GM12878 (cell line): ENCODE measurements at regions of chr15 and their contacts with region 1.

Region 1: GRCh38 chr15:79853458-79854328 is 43.1 kb downstream of the MTHFS start:
- DNase-seq: peak; percentile 52
- ATAC-seq: peak; percentile 99
- H3K4me3 ChIP-seq: no peak overlapping the region
- H3K27ac ChIP-seq: no peak overlapping the region
- H3K4me1 ChIP-seq: no peaks in the 10 kb centered on the region
- H3K27me3 ChIP-seq: no peaks in the 10 kb centered on the region
- CTCF ChIP-seq: peak; percentile 94 to 98 (median 97); a peak in 5 of 6 replicates
- EP300 ChIP-seq: no peak
- POLR2A ChIP-seq: no peak
- RAD21 ChIP-seq: peak; percentile 84

Region 2: DNA sequence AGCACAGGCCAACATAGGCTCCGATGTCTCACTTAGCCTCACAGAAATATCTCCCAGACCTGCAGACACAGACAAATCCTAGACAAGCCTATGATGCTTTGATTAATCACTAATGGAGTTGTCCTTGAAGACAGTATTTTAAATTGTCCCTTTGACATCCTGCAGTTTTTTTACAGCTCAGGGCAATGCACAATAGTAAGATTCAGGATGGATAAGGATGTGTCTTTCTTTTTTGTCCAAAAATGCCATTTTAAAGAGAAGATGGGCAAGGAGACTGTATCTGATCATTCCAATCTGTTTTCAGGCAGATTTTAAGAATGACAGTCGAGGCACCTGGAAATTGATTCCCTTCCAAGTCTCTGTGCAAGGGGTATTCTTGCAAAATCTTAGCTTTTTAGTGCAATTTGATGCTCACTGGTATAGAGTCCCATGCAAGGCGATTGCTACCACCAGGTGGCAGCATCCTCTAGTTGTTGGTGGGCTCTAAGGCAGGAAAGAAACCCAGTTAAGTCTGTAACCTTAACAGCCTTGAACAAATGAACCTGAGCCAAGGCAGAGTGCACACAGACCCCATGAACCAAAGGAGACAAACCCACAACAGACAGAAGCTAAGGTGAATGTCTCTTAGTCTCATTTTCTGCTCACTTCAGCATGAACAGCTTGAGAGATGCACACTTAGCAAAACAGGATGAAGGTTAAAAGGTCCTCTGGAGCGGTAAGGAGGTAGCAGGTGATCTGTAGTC is 472.8 kb before region 1 on chr15:
- CTCF ChIA-PET with region 1: interaction called, 110 read pairs
- POLR2A ChIA-PET with region 1: no interaction called
- RAD21 ChIA-PET with region 1: interaction called, 29 read pairs
- SMC1A ChIA-PET with region 1: interaction called, 21 read pairs
- in situ Hi-C with region 1: loop called (anchors 5 kb)
- intact Hi-C with region 1: loop called (anchors 1 kb)
- DNase-seq: peak; percentile 15
- ATAC-seq: peak; percentile 99
- H3K4me3 ChIP-seq: no peak overlapping the region
- H3K27ac ChIP-seq: no peak overlapping the region
- H3K4me1 ChIP-seq: no peaks in the 10 kb centered on the region
- H3K27me3 ChIP-seq: no peaks in the 10 kb centered on the region
- CTCF ChIP-seq: peak; percentile 82 to 89 (median 87)
- EP300 ChIP-seq: no peak
- POLR2A ChIP-seq: no peak
- RAD21 ChIP-seq: peak; percentile 88

Region 3: DNA sequence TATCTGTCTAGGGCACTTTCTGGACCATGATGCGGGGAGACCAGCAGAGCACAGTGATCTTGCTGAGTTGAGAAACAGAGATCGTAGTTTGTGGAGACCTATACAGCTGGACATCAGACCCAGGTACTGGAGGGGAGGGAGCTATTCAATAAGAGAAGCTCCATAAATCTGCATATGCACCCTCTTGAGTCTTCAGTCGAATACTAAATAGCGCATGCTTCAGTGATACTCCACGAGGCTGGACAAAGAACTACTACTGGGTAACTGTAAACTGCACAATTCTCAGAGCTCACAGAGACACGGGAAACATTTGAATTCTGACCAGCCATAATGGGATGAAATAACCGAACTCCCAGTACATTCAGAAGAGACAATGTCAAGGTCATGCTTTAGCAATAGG is 371.9 kb before region 1 on chr15:
- CTCF ChIA-PET with region 1: no interaction called
- POLR2A ChIA-PET with region 1: no interaction called
- RAD21 ChIA-PET with region 1: no interaction called
- SMC1A ChIA-PET with region 1: no interaction called
- in situ Hi-C with region 1: no loop called
- intact Hi-C with region 1: no loop called
- DNase-seq: no peak
- ATAC-seq: no peak
- H3K4me3 ChIP-seq: no peak overlapping the region
- H3K27ac ChIP-seq: no peak overlapping the region
- H3K4me1 ChIP-seq: no peaks in the 10 kb centered on the region
- H3K27me3 ChIP-seq: no peaks in the 10 kb centered on the region; a peak in 1 of 4 replicates
- CTCF ChIP-seq: no peak
- EP300 ChIP-seq: no peak
- POLR2A ChIP-seq: no peak
- RAD21 ChIP-seq: no peak

Region 4: GRCh38 chr15:79769069-79769481 is 84.6 kb before region 1 on chr15:
- CTCF ChIA-PET with region 1: interaction called, 13 read pairs
- POLR2A ChIA-PET with region 1: no interaction called
- RAD21 ChIA-PET with region 1: interaction called, 4 read pairs
- SMC1A ChIA-PET with region 1: interaction called, 7 read pairs
- in situ Hi-C with region 1: no loop called
- intact Hi-C with region 1: loop called (anchors 2 kb)
- DNase-seq: no peak
- ATAC-seq: peak; percentile 74
- H3K4me3 ChIP-seq: no peak overlapping the region
- H3K27ac ChIP-seq: no peak overlapping the region
- H3K4me1 ChIP-seq: no peaks in the 10 kb centered on the region
- H3K27me3 ChIP-seq: no peaks in the 10 kb centered on the region; a peak in 1 of 4 replicates
- CTCF ChIP-seq: peak; percentile 37 to 58 (median 45)
- EP300 ChIP-seq: no peak
- POLR2A ChIP-seq: no peak
- RAD21 ChIP-seq: peak; percentile 68

Region 5: DNA sequence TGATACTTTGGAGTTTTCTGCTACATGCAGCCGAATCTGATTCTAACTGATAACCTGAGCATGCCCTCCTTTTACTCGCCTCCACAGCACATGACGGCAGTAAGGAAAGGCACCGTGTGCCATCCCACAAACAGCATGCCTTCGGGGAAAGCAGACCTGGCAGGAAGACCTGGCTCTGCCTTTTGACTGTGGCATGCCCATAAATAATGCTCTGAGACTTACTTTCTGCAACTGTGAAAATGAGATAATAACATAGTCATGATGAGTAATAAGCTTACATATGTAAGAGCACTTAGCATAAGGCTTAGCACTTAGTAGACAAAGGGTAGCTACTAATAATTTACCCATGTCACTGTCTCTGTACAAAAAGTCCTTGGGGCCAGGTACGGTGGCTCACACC is 10.2 kb after region 1 on chr15:
- CTCF ChIA-PET with region 1: interaction called, 102 read pairs
- POLR2A ChIA-PET with region 1: no interaction called
- RAD21 ChIA-PET with region 1: interaction called, 9 read pairs
- SMC1A ChIA-PET with region 1: interaction called, 15 read pairs
- in situ Hi-C with region 1: no loop called
- intact Hi-C with region 1: no loop called
- DNase-seq: no peak
- ATAC-seq: no peak
- H3K4me3 ChIP-seq: no peak overlapping the region
- H3K27ac ChIP-seq: no peak overlapping the region
- H3K4me1 ChIP-seq: peaks cover 3% of the 10 kb centered on the region; the same call in 1 of the 2 replicates
- H3K27me3 ChIP-seq: no peaks in the 10 kb centered on the region
- CTCF ChIP-seq: no peak
- EP300 ChIP-seq: no peak
- POLR2A ChIP-seq: no peak
- RAD21 ChIP-seq: no peak

Region 6: GRCh38 chr15:79881254-79881653 is 27.6 kb after region 1 on chr15:
- CTCF ChIA-PET with region 1: interaction called, 32 read pairs
- POLR2A ChIA-PET with region 1: interaction called, 4 read pairs
- RAD21 ChIA-PET with region 1: interaction called, 4 read pairs
- SMC1A ChIA-PET with region 1: interaction called, 18 read pairs
- in situ Hi-C with region 1: no loop called
- intact Hi-C with region 1: no loop called
- DNase-seq: no peak
- ATAC-seq: no peak
- H3K4me3 ChIP-seq: no peak overlapping the region
- H3K27ac ChIP-seq: no peak overlapping the region
- H3K4me1 ChIP-seq: no peaks in the 10 kb centered on the region
- H3K27me3 ChIP-seq: no peaks in the 10 kb centered on the region
- CTCF ChIP-seq: no peak
- EP300 ChIP-seq: no peak
- POLR2A ChIP-seq: no peak
- RAD21 ChIP-seq: no peak

Region 7: DNA sequence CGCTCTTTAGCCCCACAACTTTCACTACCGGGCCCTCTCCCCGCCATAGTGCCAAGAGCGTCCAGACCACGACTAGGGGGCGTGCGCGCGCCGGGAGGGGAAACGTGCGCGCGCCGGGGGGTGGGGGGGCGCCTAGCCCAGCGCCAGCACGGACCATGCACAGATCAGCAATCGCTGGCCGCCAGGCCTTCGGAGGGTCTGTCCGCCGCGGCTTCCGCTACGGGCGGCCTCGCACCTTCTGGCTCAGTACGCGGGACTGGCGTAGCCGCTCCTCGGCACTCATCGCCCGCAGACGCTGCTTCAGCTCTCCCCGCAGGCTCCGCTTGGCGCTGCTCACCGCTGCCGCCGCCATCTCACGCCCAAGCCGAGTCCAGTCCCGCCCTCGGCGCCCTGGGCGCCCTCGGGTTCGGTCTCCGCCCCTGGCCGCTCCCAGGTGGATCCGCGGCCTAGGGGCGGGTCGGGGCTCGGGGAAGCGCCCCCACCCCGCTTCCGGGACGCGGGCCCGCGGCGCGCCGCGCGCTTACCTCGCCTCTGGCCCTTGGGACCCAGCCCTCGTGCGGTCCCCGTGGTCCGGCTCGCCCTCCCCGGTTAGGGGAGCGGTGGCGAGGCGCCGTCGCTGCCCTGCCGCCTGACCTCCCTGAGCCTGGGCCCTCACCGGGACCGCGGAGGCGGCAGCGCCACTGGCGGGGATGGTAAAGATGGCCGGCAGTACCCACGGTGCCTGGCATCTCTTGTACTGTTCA is 43.1 kb after region 1 on chr15 and contains the start of gene MTHFS:
- CTCF ChIA-PET with region 1: interaction called, 10 read pairs
- POLR2A ChIA-PET with region 1: interaction called, 4 read pairs
- RAD21 ChIA-PET with region 1: interaction called, 3 read pairs
- SMC1A ChIA-PET with region 1: interaction called, 13 read pairs
- in situ Hi-C with region 1: no loop called
- intact Hi-C with region 1: no loop called
- DNase-seq: no peak
- ATAC-seq: peak; percentile 86
- H3K4me3 ChIP-seq: peak within 1 kb of the TSS; percentile 66
- H3K27ac ChIP-seq: peak within 1 kb of the TSS; percentile 85
- H3K4me1 ChIP-seq: peaks cover 16% of the 10 kb centered on the region
- H3K27me3 ChIP-seq: no peaks in the 10 kb centered on the region
- CTCF ChIP-seq: peak; percentile 44 to 62 (median 54)
- EP300 ChIP-seq: 0 out of 4 replicates have a peak, but pooled peaks of 1 of the 2 experiments have one; percentile 26
- POLR2A ChIP-seq: peak; percentile 94
- RAD21 ChIP-seq: peak; percentile 57
- polyA plus RNA-seq, gene MTHFS: 14.0 to 24.5 TPM

Region 8: DNA sequence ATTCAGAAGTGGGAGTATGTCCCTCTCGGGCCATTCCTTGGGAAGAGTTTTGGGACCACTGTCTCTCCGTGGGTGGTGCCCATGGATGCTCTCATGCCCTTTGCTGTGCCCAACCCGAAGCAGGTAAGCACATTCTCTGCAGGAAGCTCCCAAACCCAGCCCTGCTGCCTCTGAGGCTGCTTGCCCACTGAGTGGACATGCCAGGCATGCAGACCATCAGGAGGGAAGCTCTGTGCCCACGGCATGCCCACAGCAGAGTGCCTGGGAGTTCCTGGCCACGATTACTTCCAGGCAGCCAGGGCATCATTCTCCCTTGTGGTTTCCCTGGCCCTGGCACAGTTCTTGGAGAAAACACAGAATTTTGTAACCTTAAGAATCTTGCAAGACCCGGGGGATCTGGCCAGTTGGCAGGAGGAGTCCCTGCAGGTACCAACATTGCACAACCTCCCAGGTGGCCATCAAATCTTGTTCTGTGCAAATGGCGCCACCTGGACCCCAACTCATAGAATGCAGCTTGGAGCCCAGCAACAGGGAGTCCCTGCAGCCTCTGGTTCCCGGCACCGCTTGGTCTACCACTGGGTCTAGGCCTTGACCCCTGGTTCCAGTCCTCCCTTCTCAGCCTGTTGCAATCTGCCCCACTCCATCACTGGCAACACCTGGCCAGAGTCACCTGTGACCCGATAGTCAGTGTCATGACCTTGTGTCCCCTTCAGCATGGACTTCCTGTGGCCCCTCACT is 319.5 kb after region 1 on chr15:
- CTCF ChIA-PET with region 1: interaction called, 37 read pairs
- POLR2A ChIA-PET with region 1: no interaction called
- RAD21 ChIA-PET with region 1: interaction called, 11 read pairs
- SMC1A ChIA-PET with region 1: interaction called, 17 read pairs
- in situ Hi-C with region 1: no loop called
- intact Hi-C with region 1: loop called (anchors 1 kb)
- DNase-seq: no peak
- ATAC-seq: peak; percentile 99
- H3K4me3 ChIP-seq: no peak overlapping the region
- H3K27ac ChIP-seq: no peak overlapping the region
- H3K4me1 ChIP-seq: no peaks in the 10 kb centered on the region; the same call in 1 of the 2 replicates
- H3K27me3 ChIP-seq: no peaks in the 10 kb centered on the region
- CTCF ChIP-seq: peak; percentile 80 to 84 (median 81)
- EP300 ChIP-seq: no peak
- POLR2A ChIP-seq: no peak
- RAD21 ChIP-seq: peak; percentile 96